Activated naive CD4-positive, alpha-beta T cell treated with anti-CD3 and anti-CD28 coated beads for 36 hours (primary cell): ENCODE measurements at regions of chrX and their contacts with region 1.

Region 1: DNA sequence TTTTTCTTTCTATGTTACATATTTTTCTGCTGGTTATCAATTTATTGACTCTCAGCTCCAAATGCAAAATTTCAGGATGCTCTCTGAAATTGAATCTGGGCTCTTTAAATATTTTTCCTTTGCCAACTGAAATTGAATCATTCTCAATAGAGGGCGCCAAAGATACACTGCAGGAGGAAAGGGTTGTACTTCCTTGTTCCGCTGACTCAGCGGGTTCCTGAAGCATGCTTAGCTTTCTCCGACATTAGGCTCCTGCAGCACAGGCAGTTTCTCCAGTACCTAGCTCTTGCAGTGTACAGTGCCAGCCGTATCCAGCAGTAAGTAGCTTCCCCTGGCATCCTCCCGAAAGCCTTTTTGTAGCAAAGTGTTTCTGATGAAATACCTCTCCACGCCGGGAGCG is 28.8 kb upstream of the CFAP47 start:
- DNase-seq: peak; percentile 11
- H3K4me3 Mint-ChIP-seq: no peak overlapping the region
- H3K27ac Mint-ChIP-seq: no peak overlapping the region
- H3K4me1 Mint-ChIP-seq: no peaks in the 10 kb centered on the region
- H3K27me3 Mint-ChIP-seq: no peaks in the 10 kb centered on the region

Region 2: DNA sequence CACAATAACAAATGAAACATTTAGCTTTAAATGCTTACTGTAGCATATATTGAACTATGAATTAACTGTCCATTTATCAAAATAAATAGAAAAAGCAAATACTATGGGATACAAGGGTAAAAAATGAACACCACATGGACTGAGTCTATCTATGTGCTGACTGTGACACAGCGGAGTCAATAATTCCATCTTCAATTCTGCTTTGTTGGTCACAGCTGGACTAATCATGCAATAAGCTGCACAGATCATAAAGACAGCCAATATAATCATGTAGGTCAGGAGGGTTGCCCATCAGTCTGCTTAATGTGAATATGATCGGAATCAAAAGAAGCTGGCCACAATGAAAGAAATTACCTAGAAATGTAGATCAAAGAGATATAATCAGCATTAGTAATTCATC is 1662.9 kb before region 1 on chrX:
- CTCF ChIA-PET with region 1: no interaction called
- intact Hi-C with region 1: no loop called
- DNase-seq: no peak
- H3K4me3 Mint-ChIP-seq: no peak overlapping the region
- H3K27ac Mint-ChIP-seq: no peak overlapping the region
- H3K4me1 Mint-ChIP-seq: no peaks in the 10 kb centered on the region
- H3K27me3 Mint-ChIP-seq: no peaks in the 10 kb centered on the region

Region 3: DNA sequence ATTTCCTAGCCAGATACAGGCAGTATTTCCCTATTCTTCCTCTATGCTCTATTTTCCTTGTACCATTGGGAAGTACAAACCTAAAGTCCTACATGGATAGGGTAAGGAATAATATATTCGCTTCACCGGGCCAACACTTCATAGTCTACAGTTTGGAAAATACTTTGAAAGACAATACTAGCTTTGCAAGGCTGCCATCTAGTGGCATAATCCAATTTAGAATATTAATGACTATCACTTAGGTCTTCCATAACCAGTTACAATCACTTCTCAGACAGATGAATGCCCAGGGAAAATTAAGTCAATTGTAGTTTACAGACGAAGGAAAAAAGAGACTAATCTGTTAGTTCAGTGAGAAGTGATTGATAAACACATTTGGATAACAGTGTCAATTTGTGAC is 976.4 kb after region 1 on chrX:
- CTCF ChIA-PET with region 1: no interaction called
- intact Hi-C with region 1: loop called (anchors 1 kb)
- DNase-seq: no peak
- H3K4me3 Mint-ChIP-seq: no peak overlapping the region
- H3K27ac Mint-ChIP-seq: no peak overlapping the region
- H3K4me1 Mint-ChIP-seq: no peaks in the 10 kb centered on the region
- H3K27me3 Mint-ChIP-seq: peaks cover 2% of the 10 kb centered on the region

Region 4: GRCh38 chrX:36908801-36909676 is 1018.3 kb after region 1 on chrX:
- CTCF ChIA-PET with region 1: no interaction called
- intact Hi-C with region 1: loop called (anchors 5 kb)
- DNase-seq: no peak
- H3K4me3 Mint-ChIP-seq: no peak overlapping the region
- H3K27ac Mint-ChIP-seq: no peak overlapping the region
- H3K4me1 Mint-ChIP-seq: no peaks in the 10 kb centered on the region
- H3K27me3 Mint-ChIP-seq: no peaks in the 10 kb centered on the region